ENCODE measurements at regions of chr7 and their contacts with region 1.

Region 1: DNA sequence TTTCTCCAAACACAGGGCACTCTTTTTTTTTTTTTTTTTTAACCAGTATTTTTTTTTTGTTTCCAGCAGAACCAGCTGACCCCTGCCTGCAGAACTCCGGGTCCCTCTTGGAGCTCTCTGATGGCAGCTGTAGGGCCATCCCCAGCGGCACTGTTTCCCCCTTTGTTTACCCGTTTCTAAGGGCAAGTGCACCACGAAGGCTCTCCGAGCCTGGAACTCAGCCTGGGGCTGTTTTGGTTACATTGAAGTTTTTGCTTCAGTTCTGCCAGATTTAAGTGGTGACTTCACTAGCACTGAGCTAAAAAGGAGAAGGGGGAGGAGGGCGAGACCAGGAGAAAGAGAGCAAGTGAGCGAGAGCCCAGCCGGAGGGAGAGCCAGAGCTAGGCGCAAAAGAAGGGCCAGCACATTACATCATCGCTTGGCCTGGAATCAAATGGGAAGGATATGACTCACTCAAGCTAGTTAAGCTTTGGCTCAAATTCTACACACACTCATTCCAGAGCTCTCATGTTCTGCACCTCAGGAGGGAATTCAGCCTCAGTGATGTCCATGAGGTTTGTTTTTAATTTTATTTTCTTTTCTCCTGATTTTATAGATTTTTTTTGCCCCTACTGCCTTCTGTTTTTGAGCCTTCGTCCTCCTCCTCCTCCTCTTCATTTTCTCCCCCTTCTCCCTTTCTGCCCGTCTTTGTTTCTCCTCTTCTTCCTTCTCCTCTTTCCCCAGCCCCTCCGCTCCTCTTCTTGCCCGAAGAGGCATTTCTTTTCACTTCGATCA is 272.3 kb downstream of the TRIL start:
- DNase-seq: peak; percentile 25
- ATAC-seq: peak; percentile 57
- H3K4me3 Mint-ChIP-seq: no peak overlapping the region
- H3K27ac Mint-ChIP-seq: no peak overlapping the region
- H3K4me1 Mint-ChIP-seq: peaks cover 4% of the 10 kb centered on the region
- H3K27me3 Mint-ChIP-seq: no peaks in the 10 kb centered on the region
- CTCF ChIP-seq: no peak

Region 2: DNA sequence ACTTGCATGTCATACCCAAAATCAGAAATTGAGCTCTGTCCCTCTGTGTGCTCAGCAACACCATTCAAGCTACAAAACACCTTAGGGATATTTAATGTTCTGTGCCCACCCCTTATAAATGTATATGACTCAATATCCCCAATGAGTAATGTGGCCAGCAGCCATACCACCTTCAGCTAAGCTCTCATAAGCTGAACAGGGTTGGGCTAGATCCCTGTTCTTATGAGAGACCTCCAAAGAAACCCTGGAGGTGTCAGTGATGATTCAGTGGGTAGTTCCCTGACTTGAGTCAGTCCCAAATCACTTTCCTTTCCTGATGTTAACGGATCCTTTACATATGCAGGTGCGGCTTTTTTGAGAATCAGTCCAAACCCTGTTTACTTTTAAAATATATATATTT is 19.7 kb before region 1 on chr7:
- CTCF ChIA-PET with region 1: no interaction called
- POLR2A ChIA-PET with region 1: no interaction called
- intact Hi-C with region 1: no loop called
- DNase-seq: no peak
- ATAC-seq: no peak
- H3K4me3 Mint-ChIP-seq: no peak overlapping the region
- H3K27ac Mint-ChIP-seq: no peak overlapping the region
- H3K4me1 Mint-ChIP-seq: peaks cover 10% of the 10 kb centered on the region
- H3K27me3 Mint-ChIP-seq: peaks cover 6% of the 10 kb centered on the region
- CTCF ChIP-seq: no peak

Region 3: DNA sequence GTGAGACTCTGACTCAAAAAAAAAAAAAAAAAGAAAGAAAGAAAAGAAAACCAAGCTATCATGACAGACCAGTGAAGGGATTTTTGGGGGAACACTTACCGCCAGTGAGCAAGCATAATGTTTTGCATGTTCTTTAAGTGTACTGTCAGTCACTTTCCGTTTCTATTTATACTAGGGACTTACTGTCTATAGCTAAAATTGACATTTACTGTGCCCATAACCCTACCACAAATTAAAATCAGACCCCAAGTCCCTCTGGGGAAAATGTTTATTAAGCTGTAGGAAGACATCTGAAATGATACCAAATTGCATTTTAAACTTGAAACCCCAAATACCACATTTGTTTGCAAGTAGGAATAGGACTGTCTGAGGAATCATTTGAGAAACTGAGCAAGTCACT is 19.5 kb after region 1 on chr7:
- CTCF ChIA-PET with region 1: no interaction called
- POLR2A ChIA-PET with region 1: interaction called, 3 read pairs
- intact Hi-C with region 1: loop called (anchors 1 kb)
- DNase-seq: no peak
- ATAC-seq: peak; percentile 89
- H3K4me3 Mint-ChIP-seq: peak overlapping the region; percentile 44
- H3K27ac Mint-ChIP-seq: peak overlapping the region; percentile 69
- H3K4me1 Mint-ChIP-seq: peaks cover 39% of the 10 kb centered on the region
- H3K27me3 Mint-ChIP-seq: no peaks in the 10 kb centered on the region
- CTCF ChIP-seq: no peak

Region 4: DNA sequence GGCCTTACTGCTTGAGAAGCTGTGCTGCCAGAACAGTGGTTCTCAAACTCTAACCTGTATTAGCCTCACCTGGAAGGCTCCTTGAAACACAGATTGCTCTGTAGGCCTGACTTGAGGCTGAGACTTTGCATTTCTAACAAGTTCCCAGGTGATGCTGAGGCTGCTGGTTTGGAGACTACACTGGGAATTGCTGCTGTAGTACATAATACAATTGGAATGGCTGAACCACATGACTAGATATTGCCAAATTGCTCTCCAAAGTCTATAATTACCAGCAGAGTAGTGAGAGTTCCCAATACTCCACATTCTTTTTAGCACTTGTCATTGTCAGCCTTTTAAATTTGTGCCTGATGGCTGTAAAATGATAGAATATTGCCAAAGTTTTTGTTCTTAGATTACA is 1382.2 kb after region 1 on chr7:
- CTCF ChIA-PET with region 1: no interaction called
- POLR2A ChIA-PET with region 1: no interaction called
- intact Hi-C with region 1: no loop called
- DNase-seq: no peak
- ATAC-seq: no peak
- H3K4me3 Mint-ChIP-seq: no peak overlapping the region
- H3K27ac Mint-ChIP-seq: no peak overlapping the region
- H3K4me1 Mint-ChIP-seq: no peaks in the 10 kb centered on the region
- H3K27me3 Mint-ChIP-seq: no peaks in the 10 kb centered on the region
- CTCF ChIP-seq: no peak